PC-9 (cell line): ENCODE measurements at regions of chr4 and their contacts with region 1.

Region 1: GRCh38 chr4:152679414-152680281 is at the start of gene TMEM154:
- DNase-seq: peak; percentile 65 to 84
- H3K4me3 ChIP-seq: peak within 1 kb of the TSS; percentile 80
- H3K27ac ChIP-seq: peak within 1 kb of the TSS; percentile 89
- H3K4me1 ChIP-seq: peaks cover 35% of the 10 kb centered on the region
- H3K27me3 ChIP-seq: no peaks in the 10 kb centered on the region
- CTCF ChIP-seq: no peak
- total RNA-seq, gene TMEM154: 19.7 and 34.5 TPM in 2 replicates

Region 2: DNA sequence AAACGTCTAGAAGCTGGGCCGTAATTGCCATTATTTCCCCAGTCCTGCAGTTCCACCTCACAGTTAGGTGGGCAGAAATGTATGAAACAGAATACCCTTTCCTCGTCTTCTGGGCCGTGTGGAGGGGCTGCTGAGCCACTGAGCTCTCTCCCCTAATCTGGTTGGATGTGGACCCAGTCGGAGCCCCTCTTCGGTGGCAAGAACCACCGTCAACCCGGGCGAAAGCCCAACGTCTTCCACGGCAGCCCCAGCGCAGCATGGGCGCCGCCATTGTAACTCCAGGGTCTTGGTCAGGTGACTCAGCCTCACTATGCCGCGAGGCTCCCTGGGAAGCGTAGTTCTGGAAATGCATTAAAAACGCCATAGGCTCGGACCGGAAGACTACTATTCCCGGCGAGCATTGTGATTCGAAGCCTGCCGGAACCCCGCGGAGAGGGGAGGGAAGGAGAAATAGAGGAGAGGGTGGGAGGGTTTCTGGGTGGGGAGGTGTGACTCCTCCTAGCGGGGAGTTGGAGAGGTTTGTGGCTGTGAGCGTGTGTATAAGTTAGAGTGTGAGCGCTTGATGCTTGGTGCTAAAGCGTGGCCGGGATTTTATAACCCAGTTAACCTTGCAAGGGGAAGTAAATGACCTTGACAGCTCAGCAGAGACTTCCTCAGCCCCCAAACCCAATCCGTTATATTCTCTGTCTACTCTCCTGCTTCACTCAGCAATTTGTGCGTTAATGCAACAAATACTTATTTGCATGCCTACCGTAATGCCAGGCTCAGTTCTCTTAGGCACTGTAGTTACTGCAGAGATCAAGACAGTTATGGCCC is 918.7 kb before region 1 on chr4 and contains the start of gene GATB:
- CTCF ChIA-PET with region 1: no interaction called
- POLR2A ChIA-PET with region 1: no interaction called
- intact Hi-C with region 1: no loop called
- DNase-seq: peak; percentile 87 to 88
- H3K4me3 ChIP-seq: peak within 1 kb of the TSS; percentile 94
- H3K27ac ChIP-seq: peak within 1 kb of the TSS; percentile 47
- H3K4me1 ChIP-seq: peaks cover 6% of the 10 kb centered on the region; the same call in 1 of the 2 replicates
- H3K27me3 ChIP-seq: no peaks in the 10 kb centered on the region
- CTCF ChIP-seq: peak; percentile 51
- total RNA-seq, gene GATB: 23.5 and 24.2 TPM in 2 replicates

Region 3: GRCh38 chr4:152663203-152664066 is 16.2 kb before region 1 on chr4:
- CTCF ChIA-PET with region 1: no interaction called
- POLR2A ChIA-PET with region 1: interaction called, 15 read pairs
- intact Hi-C with region 1: no loop called
- DNase-seq: no peak
- H3K4me3 ChIP-seq: no peak overlapping the region
- H3K27ac ChIP-seq: no peak overlapping the region
- H3K4me1 ChIP-seq: no peaks in the 10 kb centered on the region
- H3K27me3 ChIP-seq: no peaks in the 10 kb centered on the region
- CTCF ChIP-seq: no peak

Region 4: DNA sequence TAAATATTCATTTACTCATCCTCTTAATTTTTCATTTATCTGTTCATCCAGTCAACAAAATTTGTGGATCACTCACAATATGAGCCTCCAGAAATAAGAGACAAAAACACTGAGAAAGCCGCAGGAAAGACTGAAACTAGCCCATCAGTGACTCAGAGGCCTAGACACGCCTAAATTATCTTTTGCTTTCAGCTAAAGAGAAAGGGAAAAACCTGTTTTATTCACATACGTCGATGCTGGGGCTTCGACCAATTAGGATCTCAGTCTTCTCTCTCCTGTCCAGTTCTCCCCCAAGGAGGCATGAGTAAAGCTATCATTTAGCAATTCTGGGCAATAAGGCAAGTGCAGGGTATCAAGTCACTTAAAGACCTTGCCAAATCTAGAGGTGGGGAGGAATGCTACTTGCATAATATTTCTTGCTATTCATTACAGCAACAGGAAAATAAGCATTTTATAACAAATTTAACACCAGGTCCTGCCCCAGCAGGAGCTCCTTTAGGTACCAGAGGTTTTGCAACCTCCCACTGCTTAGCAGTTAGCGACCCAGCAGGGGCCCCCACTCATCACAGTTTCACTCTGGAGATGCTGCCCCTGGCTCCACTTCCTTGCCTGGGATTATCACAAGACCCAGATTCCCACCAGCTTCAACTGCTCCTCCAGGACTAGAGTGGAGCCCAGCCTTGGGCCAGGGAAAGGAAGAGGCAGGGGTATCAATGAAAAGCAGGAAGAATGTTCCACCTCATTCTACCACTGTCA is 30.2 kb after region 1 on chr4:
- CTCF ChIA-PET with region 1: interaction called, 3 read pairs
- POLR2A ChIA-PET with region 1: interaction called, 4 read pairs
- intact Hi-C with region 1: loop called (anchors 2 kb)
- DNase-seq: peak; percentile 49 to 97
- H3K4me3 ChIP-seq: no peak overlapping the region
- H3K27ac ChIP-seq: peak overlapping the region; percentile 95
- H3K4me1 ChIP-seq: peaks cover 33% of the 10 kb centered on the region
- H3K27me3 ChIP-seq: no peaks in the 10 kb centered on the region
- CTCF ChIP-seq: no peak

Region 5: GRCh38 chr4:152719801-152720556 is 40.3 kb after region 1 on chr4:
- CTCF ChIA-PET with region 1: interaction called, 3 read pairs
- POLR2A ChIA-PET with region 1: no interaction called
- intact Hi-C with region 1: loop called (anchors 5 kb)
- DNase-seq: no peak
- H3K4me3 ChIP-seq: no peak overlapping the region
- H3K27ac ChIP-seq: no peak overlapping the region
- H3K4me1 ChIP-seq: no peaks in the 10 kb centered on the region
- H3K27me3 ChIP-seq: no peaks in the 10 kb centered on the region
- CTCF ChIP-seq: no peak